ENCODE measurements at regions of chr3 and their contacts with region 1.

Region 1: GRCh38 chr3:122497425-122497824 is 17.3 kb downstream of the KPNA1 start:
- DNase-seq: peak; percentile 14
- H3K4me3 Mint-ChIP-seq: peak overlapping the region; percentile 17
- H3K27ac Mint-ChIP-seq: no peak overlapping the region
- H3K4me1 Mint-ChIP-seq: peaks cover 43% of the 10 kb centered on the region
- H3K27me3 Mint-ChIP-seq: no peaks in the 10 kb centered on the region

Region 2: DNA sequence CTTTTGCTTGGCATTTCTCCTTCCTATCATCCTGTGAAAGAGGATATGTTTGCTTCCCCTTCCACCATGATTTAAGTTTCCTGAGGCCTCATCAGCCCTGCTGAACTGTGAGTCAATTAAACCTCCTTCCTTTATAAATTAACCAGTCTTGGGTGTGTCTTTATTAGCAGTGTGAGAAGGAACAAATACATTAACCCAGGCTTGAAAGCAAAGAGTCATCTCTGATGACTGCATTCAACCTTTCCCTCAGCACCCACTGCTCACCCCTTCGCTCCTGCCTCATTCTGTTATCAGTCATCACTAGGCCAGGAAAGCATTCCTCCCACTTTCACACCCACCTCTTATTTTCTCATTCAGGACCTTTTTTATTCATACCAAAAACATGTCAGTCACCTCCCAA is 373.6 kb before region 1 on chr3:
- intact Hi-C with region 1: no loop called
- DNase-seq: no peak
- H3K4me3 Mint-ChIP-seq: peak overlapping the region; percentile 8
- H3K27ac Mint-ChIP-seq: no peak overlapping the region
- H3K4me1 Mint-ChIP-seq: peaks cover 11% of the 10 kb centered on the region
- H3K27me3 Mint-ChIP-seq: peaks cover 15% of the 10 kb centered on the region

Region 3: GRCh38 chr3:122458992-122459391 is 38.4 kb before region 1 on chr3:
- intact Hi-C with region 1: no loop called
- DNase-seq: no peak
- H3K4me3 Mint-ChIP-seq: no peak overlapping the region
- H3K27ac Mint-ChIP-seq: no peak overlapping the region
- H3K4me1 Mint-ChIP-seq: no peaks in the 10 kb centered on the region
- H3K27me3 Mint-ChIP-seq: no peaks in the 10 kb centered on the region

Region 4: GRCh38 chr3:122508135-122508914 is 10.9 kb after region 1 on chr3:
- intact Hi-C with region 1: loop called (anchors 1 kb)
- DNase-seq: no peak
- H3K4me3 Mint-ChIP-seq: no peak overlapping the region
- H3K27ac Mint-ChIP-seq: no peak overlapping the region
- H3K4me1 Mint-ChIP-seq: peaks cover 62% of the 10 kb centered on the region
- H3K27me3 Mint-ChIP-seq: no peaks in the 10 kb centered on the region

Region 5: DNA sequence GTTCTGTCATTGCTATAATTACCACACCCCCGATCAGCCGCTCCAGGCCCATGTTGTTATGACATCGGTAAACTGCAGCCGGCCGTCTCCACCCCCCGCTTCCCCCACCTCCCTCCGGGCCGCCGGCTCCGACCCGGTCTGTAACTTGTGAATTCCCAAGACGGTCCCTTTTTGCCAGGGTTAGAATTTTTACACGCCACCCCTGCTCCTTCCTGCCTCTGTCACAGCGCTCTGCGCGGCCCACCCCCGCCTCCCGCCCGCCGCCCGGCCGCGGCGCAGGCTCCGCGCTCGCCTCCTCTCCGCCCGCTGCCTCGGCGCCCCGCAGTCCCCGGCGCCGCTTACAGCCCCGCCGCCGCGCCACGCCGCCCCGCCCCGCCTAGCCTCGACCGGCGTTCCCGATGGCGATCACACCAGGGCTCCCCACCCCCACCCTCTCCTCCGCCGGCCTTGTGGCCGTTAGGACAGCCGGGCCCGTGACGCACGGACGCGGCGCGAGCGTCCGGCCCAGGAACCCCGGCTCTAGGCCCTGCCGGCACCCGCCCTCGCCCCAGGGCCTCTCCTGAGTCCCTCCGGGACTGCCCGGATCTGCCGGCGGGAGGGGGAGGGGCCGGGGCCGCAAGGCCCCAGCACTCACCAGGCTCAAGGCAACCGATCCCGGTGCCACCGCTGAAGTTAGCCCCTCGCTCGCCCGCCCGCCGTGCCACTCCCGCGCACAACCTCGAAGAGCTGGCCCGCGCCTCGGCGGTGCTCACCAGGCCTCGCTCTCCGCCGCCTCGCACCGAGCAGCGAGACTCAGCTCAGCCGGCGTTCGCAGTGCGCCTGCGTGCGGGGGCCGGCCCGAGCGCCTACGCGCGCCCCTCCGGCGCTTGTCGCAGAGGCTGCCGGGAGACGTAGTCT is 16.9 kb after region 1 on chr3 and contains the start of gene KPNA1:
- intact Hi-C with region 1: loop called (anchors 1 kb)
- DNase-seq: peak; percentile 85
- H3K4me3 Mint-ChIP-seq: peak within 1 kb of the TSS; percentile 90
- H3K27ac Mint-ChIP-seq: peak within 1 kb of the TSS; percentile 92
- H3K4me1 Mint-ChIP-seq: peaks cover 46% of the 10 kb centered on the region
- H3K27me3 Mint-ChIP-seq: peaks cover 4% of the 10 kb centered on the region
- total RNA-seq, gene KPNA1: 81.7 and 88.2 TPM in 2 replicates